Sigmoid colon (tissue), 7 donors: ENCODE measurements at regions of chr3 and their contacts with region 1.

Region 1: DNA sequence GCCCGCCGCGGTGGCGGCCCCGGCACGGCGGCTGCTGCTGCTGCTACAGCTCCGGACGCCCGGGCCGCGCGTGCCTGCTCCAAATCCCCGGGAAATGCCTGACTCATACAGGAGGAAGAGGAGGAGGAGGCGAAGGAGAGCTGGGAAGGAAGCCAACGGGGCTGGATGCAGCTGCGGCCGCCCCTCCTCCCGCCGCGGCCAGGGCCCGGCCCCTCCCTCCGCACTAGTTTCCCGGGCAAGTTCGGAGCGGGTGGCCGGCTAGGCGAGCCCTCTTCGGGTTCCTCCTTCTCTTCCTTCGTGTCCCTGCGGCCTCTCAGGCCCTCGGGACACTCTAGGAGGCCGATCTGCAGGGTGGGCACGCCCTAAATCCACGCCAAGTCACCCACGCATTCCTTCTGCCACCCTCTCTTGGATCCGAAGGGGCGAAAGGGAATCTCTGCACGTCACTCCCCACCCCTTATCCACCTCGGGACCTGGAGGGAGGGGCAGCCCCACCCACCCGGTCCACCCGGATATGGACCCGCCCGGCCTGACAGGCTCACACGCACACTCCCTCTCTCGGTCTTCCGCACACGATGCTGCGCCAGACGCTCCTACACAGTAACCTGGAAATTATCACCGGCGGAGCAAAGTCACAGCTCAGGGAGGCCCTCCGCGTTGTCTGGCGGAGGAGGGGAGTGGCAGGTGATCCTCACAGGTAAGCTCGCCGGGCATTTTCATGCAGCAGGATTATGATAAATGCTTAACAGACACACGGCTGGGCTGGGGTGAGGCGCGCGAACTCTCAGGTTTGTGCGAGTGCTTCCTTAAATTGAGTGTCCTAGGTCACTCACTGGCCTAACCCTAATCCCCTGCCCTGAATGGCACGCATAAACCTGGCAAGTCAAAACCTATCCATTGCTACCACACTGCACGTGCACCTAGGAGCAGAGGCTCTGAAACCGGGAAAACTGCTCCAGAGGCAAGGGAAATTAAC is at the starts of genes OSBPL10 and ZNF860:
- DNase-seq: peak; percentile 96
- H3K4me3 ChIP-seq: peak within 1 kb of the TSS; percentile 50 to 89 (median 75)
- H3K27ac ChIP-seq: peak within 1 kb of the TSS; percentile 83 to 89 (median 87)
- H3K4me1 ChIP-seq: peaks cover 0 to 27% (median 13%) of the 10 kb centered on the region in 4 donors
- H3K27me3 ChIP-seq: no peaks in the 10 kb centered on the region
- CTCF ChIP-seq: no peak
- EP300 ChIP-seq: peak in 1 of 4 donors; percentile 9
- POLR2A ChIP-seq: peak in 1 of 2 donors; percentile 10
- total RNA-seq, gene OSBPL10: 7.8 to 77.7 (median 41.2) TPM
- total RNA-seq, gene ZNF860: under 0.01 to 1.3 (median 0.55) TPM

Region 2: DNA sequence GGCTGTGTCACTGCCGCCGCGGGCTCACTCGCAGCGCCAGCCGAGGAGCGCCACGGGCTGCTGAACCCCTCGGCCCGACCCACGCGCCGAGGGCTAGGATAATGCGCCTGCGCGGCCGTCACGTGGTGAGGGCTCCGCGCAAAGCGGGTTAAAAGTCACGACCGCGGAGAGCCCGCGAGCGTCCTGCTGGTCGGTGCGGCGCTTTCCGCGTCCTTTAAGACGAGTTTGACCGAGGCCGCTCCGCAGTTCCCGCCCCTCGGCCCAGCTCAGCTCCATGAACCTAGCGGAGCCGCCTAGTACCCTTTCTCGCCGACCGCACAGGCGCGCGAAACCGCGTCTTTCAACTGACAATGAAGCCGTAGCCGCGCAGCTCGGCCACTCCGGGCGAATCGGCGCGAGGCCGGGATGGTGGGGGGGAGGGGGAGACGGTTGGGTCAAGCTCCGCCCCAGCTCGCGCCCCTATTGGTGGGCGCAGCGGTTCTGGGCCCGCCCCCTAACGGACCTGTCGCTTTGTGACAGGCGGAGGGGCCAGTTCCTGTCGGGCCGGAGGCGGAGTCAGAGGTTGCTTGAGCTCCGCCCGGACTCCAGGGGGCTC is 449.4 kb before region 1 on chr3:
- intact Hi-C with region 1: loop called (anchors 5 kb)
- DNase-seq: peak; percentile 100
- H3K4me3 ChIP-seq: peak overlapping the region; percentile 75 to 95 (median 90)
- H3K27ac ChIP-seq: peak overlapping the region; percentile 92 to 99 (median 96)
- H3K4me1 ChIP-seq: peaks cover 0 to 41% (median 33%) of the 10 kb centered on the region in 4 donors
- H3K27me3 ChIP-seq: no peaks in the 10 kb centered on the region
- CTCF ChIP-seq: peak in 1 of 4 experiments; percentile 11
- EP300 ChIP-seq: peak in 1 of 4 donors; percentile 19
- POLR2A ChIP-seq: peak; percentile 62 to 85

Region 3: DNA sequence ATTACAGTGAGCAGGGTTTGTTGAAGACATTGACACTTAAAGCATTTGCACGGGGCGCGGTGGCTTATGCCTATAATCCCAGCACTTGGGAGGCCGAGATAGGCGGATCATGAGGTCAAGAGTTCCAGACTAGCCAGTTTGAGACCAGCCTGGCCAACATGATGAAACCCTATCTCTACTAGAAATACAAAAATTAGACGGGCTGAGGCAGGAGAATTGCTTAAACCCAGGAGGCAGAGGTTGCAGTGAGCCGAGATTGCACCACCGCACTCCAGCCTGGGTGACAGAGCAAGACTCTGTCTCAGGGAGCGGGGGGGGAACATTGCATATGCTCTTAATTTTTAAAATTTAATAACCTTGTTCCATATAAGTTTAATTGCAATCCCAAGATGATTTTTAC is 436.9 kb before region 1 on chr3:
- intact Hi-C with region 1: loop called (anchors 5 kb)
- DNase-seq: no peak
- H3K4me3 ChIP-seq: no peak overlapping the region
- H3K27ac ChIP-seq: peak overlapping the region in 1 of 4 donors; percentile 15
- H3K4me1 ChIP-seq: peaks cover 0 to 59% (median 38%) of the 10 kb centered on the region in 4 donors
- H3K27me3 ChIP-seq: no peaks in the 10 kb centered on the region
- CTCF ChIP-seq: no peak
- EP300 ChIP-seq: no peak
- POLR2A ChIP-seq: no peak

Region 4: DNA sequence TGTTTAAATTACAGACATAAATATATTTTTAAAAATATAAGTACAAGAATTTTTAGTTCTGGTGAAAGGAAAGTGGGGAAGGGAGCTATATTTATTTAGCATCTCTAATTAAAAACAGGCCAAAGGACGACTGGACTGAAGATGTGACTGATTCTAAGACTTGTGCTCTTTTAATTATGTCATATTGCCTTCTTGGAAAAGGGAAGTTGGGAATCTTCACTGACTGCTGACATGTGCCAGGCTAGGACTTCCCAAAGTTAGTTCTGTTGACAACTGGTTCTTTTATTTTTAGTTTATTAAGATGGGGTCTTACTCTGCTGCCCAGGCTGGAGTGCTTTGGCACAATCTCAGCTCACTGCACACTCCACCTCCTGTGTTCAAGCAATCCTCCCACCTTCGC is 717.0 kb after region 1 on chr3:
- intact Hi-C with region 1: no loop called
- DNase-seq: no peak
- H3K4me3 ChIP-seq: no peak overlapping the region
- H3K27ac ChIP-seq: no peak overlapping the region
- H3K4me1 ChIP-seq: peaks cover 0 to 4% (median under 1%) of the 10 kb centered on the region in 4 donors
- H3K27me3 ChIP-seq: no peaks in the 10 kb centered on the region
- CTCF ChIP-seq: no peak
- EP300 ChIP-seq: no peak
- POLR2A ChIP-seq: no peak